ENCODE measurements at regions of chr7 and their contacts with region 1.

Region 1: GRCh38 chr7:129343099-129343700 is 91.0 kb upstream of the STRIP2 start:
- DNase-seq: peak in 4 of 5 donors; percentile 17 to 44 (median 34)
- H3K4me3 ChIP-seq: no peak overlapping the region
- H3K4me3 Mint-ChIP-seq: no peak overlapping the region
- H3K27ac ChIP-seq: no peak overlapping the region
- H3K27ac Mint-ChIP-seq: no peak overlapping the region
- H3K4me1 ChIP-seq: no peaks in the 10 kb centered on the region
- H3K4me1 Mint-ChIP-seq: peaks cover 9 to 12% (median 10%) of the 10 kb centered on the region in 4 donors
- H3K27me3 ChIP-seq: no peaks in the 10 kb centered on the region
- H3K27me3 Mint-ChIP-seq: no peaks in the 10 kb centered on the region

Region 2: DNA sequence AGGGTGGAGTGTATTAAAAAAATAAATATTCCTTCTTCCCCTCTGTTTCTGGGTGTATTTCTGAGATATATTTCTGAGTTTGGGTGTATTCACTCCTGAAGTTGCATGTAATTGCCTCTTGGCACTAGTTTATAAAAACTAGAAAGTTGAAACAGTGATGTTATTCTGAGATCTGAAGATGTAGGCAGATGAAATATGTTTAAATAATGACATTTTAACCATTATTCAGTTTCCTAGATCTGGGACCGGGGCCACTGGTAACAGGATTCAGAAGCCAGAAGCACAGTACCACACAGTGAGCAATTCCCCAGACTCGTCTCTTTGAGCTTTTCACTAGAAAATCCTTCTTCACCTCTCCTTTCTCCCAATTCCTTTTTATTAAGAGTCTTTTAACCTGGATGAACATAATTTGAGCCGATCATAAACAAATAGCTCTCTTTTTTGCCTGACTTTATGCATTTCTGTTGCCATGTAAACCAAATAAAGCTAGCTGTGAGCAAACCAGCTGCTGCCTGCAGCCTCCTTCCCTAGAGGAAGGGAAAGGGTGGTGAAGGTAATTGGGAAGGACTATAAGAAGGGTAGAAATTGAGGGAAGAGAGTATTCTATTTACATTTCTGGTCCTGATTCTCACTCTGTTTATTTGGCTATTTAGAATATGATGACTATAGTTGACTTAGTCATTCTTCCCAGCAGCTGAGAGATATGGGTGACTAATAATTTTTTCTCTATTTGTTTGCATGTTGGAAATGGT is 10.7 kb before region 1 on chr7:
- CTCF ChIA-PET with region 1: interaction called, 12 read pairs
- POLR2A ChIA-PET with region 1: no interaction called
- intact Hi-C with region 1: no loop called
- DNase-seq: no peak
- H3K4me3 ChIP-seq: no peak overlapping the region
- H3K4me3 Mint-ChIP-seq: no peak overlapping the region
- H3K27ac ChIP-seq: no peak overlapping the region
- H3K27ac Mint-ChIP-seq: peak overlapping the region in 1 of 7 donors; percentile 57
- H3K4me1 ChIP-seq: no peaks in the 10 kb centered on the region
- H3K4me1 Mint-ChIP-seq: no peaks in the 10 kb centered on the region
- H3K27me3 ChIP-seq: no peaks in the 10 kb centered on the region
- H3K27me3 Mint-ChIP-seq: no peaks in the 10 kb centered on the region

Region 3: GRCh38 chr7:129376076-129376777 is 33.0 kb after region 1 on chr7:
- CTCF ChIA-PET with region 1: interaction called, 18 read pairs
- POLR2A ChIA-PET with region 1: no interaction called
- intact Hi-C with region 1: no loop called
- DNase-seq: peak; percentile 23 to 61 (median 34)
- H3K4me3 ChIP-seq: no peak overlapping the region
- H3K4me3 Mint-ChIP-seq: no peak overlapping the region
- H3K27ac ChIP-seq: no peak overlapping the region
- H3K27ac Mint-ChIP-seq: no peak overlapping the region
- H3K4me1 ChIP-seq: no peaks in the 10 kb centered on the region
- H3K4me1 Mint-ChIP-seq: peaks cover 7 to 13% (median 10%) of the 10 kb centered on the region in 4 donors
- H3K27me3 ChIP-seq: no peaks in the 10 kb centered on the region
- H3K27me3 Mint-ChIP-seq: no peaks in the 10 kb centered on the region

Region 4: GRCh38 chr7:129468087-129468486 is 124.9 kb after region 1 on chr7:
- CTCF ChIA-PET with region 1: interaction called, 23 read pairs
- POLR2A ChIA-PET with region 1: no interaction called
- intact Hi-C with region 1: loop called (anchors 1 kb)
- DNase-seq: no peak
- H3K4me3 ChIP-seq: no peak overlapping the region
- H3K4me3 Mint-ChIP-seq: no peak overlapping the region
- H3K27ac ChIP-seq: no peak overlapping the region
- H3K27ac Mint-ChIP-seq: no peak overlapping the region
- H3K4me1 ChIP-seq: no peaks in the 10 kb centered on the region
- H3K4me1 Mint-ChIP-seq: no peaks in the 10 kb centered on the region
- H3K27me3 ChIP-seq: no peaks in the 10 kb centered on the region
- H3K27me3 Mint-ChIP-seq: no peaks in the 10 kb centered on the region

Measured in CD4-positive, alpha-beta memory T cell (primary cell).